ENCODE measurements at regions of chr9 and their contacts with region 1.

Region 1: GRCh38 chr9:121972501-121972981 is 120.6 kb downstream of the TTLL11 start:
- DNase-seq: peak; percentile 69
- H3K4me3 ChIP-seq: no peak overlapping the region
- H3K27ac ChIP-seq: no peak overlapping the region
- H3K27me3 ChIP-seq: no peaks in the 10 kb centered on the region
- CTCF ChIP-seq: no peak

Region 2: GRCh38 chr9:121744002-121744686 is 228.4 kb before region 1 on chr9:
- in situ Hi-C with region 1: loop called (anchors 25 kb)
- DNase-seq: peak; percentile 34
- H3K4me3 ChIP-seq: peak overlapping the region; percentile 66
- H3K27ac ChIP-seq: peak overlapping the region; percentile 81
- H3K27me3 ChIP-seq: no peaks in the 10 kb centered on the region
- CTCF ChIP-seq: peak; percentile 71

Region 3: GRCh38 chr9:121779381-121780117 is 193.0 kb before region 1 on chr9:
- in situ Hi-C with region 1: no loop called
- DNase-seq: peak; percentile 72
- H3K4me3 ChIP-seq: no peak overlapping the region
- H3K27ac ChIP-seq: peak overlapping the region; percentile 54
- H3K27me3 ChIP-seq: no peaks in the 10 kb centered on the region
- CTCF ChIP-seq: no peak

Measured in brain microvascular endothelial cell (primary cell).